ENCODE measurements at regions of chr20 and their contacts with region 1.

Region 1: GRCh38 chr20:46767127-46767761 is 57.8 kb downstream of the SLC2A10 start:
- DNase-seq: peak; percentile 16
- H3K4me3 Mint-ChIP-seq: no peak overlapping the region
- H3K27ac Mint-ChIP-seq: no peak overlapping the region
- H3K4me1 Mint-ChIP-seq: no peaks in the 10 kb centered on the region
- H3K27me3 Mint-ChIP-seq: peaks cover 3% of the 10 kb centered on the region

Region 2: DNA sequence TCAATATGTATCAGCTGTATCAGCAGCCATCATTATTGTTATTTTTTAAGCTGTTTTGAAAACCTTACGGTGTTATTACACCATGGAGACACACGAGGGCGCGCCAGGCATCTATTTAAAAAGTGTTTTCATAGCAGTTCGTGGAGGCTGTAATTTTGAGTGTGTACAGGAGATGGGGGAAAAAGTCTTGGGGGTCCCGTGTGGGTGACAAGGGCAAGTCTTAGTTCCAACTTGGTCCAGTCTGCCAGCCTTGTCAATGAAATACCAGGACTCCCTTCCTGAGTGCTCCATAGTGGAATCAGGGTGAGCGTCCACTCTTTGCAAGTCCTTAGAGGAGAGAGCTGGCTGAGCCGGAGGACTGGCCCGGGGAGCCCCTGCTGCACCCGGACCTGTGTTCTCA is 14.5 kb before region 1 on chr20:
- CTCF ChIA-PET with region 1: interaction called, 11 read pairs
- POLR2A ChIA-PET with region 1: no interaction called
- intact Hi-C with region 1: no loop called
- DNase-seq: peak; percentile 67
- H3K4me3 Mint-ChIP-seq: no peak overlapping the region
- H3K27ac Mint-ChIP-seq: no peak overlapping the region
- H3K4me1 Mint-ChIP-seq: no peaks in the 10 kb centered on the region
- H3K27me3 Mint-ChIP-seq: peaks cover 25% of the 10 kb centered on the region